ENCODE measurements at regions of chr2 and their contacts with region 1.

Region 1: GRCh38 chr2:130797493-130798435 is 39.0 kb upstream of the ARHGEF4 start:
- DNase-seq: peak; percentile 91
- H3K4me3 Mint-ChIP-seq: peak overlapping the region; percentile 67
- H3K27ac Mint-ChIP-seq: no peak overlapping the region
- H3K4me1 Mint-ChIP-seq: peaks cover 4% of the 10 kb centered on the region
- H3K27me3 Mint-ChIP-seq: no peaks in the 10 kb centered on the region
- CTCF ChIP-seq: peak; percentile 98

Region 2: GRCh38 chr2:129864720-129865119 is 933.0 kb before region 1 on chr2:
- CTCF ChIA-PET with region 1: no interaction called
- POLR2A ChIA-PET with region 1: no interaction called
- intact Hi-C with region 1: no loop called
- DNase-seq: no peak
- H3K4me3 Mint-ChIP-seq: no peak overlapping the region
- H3K27ac Mint-ChIP-seq: no peak overlapping the region
- H3K4me1 Mint-ChIP-seq: no peaks in the 10 kb centered on the region
- H3K27me3 Mint-ChIP-seq: no peaks in the 10 kb centered on the region
- CTCF ChIP-seq: no peak

Region 3: DNA sequence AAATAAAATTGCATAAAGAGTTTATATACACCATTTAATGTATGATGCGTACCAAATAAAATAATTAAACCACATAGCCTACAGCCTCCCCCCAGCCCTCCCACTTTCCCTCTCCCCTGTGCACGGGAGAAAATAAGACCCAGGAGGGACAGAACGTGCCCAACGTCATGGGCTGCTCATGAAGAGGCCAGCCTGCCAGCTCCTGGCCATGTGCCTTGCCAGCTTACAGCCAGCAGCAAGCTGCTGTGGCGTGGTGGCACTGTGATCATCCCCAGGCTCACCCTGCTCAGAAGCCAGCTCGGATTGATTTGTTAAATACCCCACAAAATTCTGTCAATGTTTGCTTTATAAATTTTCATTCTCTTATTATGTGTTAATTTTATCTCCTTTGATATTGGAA is 61.3 kb before region 1 on chr2:
- CTCF ChIA-PET with region 1: no interaction called
- POLR2A ChIA-PET with region 1: no interaction called
- intact Hi-C with region 1: no loop called
- DNase-seq: no peak
- H3K4me3 Mint-ChIP-seq: no peak overlapping the region
- H3K27ac Mint-ChIP-seq: no peak overlapping the region
- H3K4me1 Mint-ChIP-seq: no peaks in the 10 kb centered on the region
- H3K27me3 Mint-ChIP-seq: peaks cover 48% of the 10 kb centered on the region
- CTCF ChIP-seq: no peak

Region 4: GRCh38 chr2:130807659-130808385 is 10.1 kb after region 1 on chr2:
- CTCF ChIA-PET with region 1: interaction called, 9 read pairs
- POLR2A ChIA-PET with region 1: interaction called, 10 read pairs
- intact Hi-C with region 1: no loop called
- DNase-seq: peak; percentile 97
- H3K4me3 Mint-ChIP-seq: peak overlapping the region; percentile 66
- H3K27ac Mint-ChIP-seq: peak overlapping the region; percentile 96
- H3K4me1 Mint-ChIP-seq: peaks cover 39% of the 10 kb centered on the region
- H3K27me3 Mint-ChIP-seq: no peaks in the 10 kb centered on the region
- CTCF ChIP-seq: no peak

Region 5: GRCh38 chr2:130836501-130837174 is 38.9 kb after region 1 on chr2 and contains the start of gene ARHGEF4:
- CTCF ChIA-PET with region 1: interaction called, 10 read pairs
- POLR2A ChIA-PET with region 1: interaction called, 8 read pairs
- intact Hi-C with region 1: loop called (anchors 1 kb)
- DNase-seq: peak; percentile 68
- H3K4me3 Mint-ChIP-seq: peak within 1 kb of the TSS; percentile 71
- H3K27ac Mint-ChIP-seq: no peak within 1 kb of the TSS
- H3K4me1 Mint-ChIP-seq: peaks cover 26% of the 10 kb centered on the region
- H3K27me3 Mint-ChIP-seq: no peaks in the 10 kb centered on the region
- CTCF ChIP-seq: no peak
- total RNA-seq, gene ARHGEF4: 52.0 and 59.3 TPM in 2 replicates

Region 6: DNA sequence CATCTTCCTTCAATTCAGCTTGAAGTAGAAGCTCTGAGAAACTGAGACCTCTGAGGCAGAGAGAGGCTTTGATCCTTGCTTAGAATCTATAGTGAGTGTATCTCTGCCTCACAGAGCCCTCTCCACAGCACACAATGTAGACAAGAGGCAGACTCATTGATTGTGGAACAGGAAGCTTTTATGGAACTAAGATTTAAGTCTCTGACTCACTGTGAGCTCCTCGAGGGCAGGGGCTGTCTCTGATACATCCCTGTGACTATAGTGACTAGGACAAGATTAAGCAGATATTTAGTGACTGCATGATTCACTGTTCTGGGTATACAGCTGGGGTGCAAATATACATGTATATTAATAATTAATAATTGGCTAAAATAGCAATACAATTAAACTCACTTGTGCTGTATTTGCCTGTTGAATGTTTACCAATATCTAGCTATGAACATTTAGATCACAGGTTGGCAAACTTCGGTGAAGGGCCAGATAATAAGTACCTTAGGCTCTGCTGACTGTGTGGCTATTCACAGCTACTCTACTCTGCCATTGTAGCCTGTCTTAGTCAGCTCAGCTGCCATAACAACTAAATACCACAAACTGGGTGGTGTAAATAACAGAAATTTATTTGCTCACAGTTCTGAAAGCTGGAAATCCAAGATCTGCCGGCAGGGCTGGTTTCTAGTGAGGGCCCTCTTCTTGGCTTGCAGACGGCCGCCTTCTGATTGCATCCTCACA is 93.3 kb after region 1 on chr2:
- CTCF ChIA-PET with region 1: interaction called, 12 read pairs
- POLR2A ChIA-PET with region 1: no interaction called
- intact Hi-C with region 1: no loop called
- DNase-seq: no peak
- H3K4me3 Mint-ChIP-seq: no peak overlapping the region
- H3K27ac Mint-ChIP-seq: peak overlapping the region; percentile 61
- H3K4me1 Mint-ChIP-seq: peaks cover 32% of the 10 kb centered on the region
- H3K27me3 Mint-ChIP-seq: no peaks in the 10 kb centered on the region
- CTCF ChIP-seq: no peak

Region 7: DNA sequence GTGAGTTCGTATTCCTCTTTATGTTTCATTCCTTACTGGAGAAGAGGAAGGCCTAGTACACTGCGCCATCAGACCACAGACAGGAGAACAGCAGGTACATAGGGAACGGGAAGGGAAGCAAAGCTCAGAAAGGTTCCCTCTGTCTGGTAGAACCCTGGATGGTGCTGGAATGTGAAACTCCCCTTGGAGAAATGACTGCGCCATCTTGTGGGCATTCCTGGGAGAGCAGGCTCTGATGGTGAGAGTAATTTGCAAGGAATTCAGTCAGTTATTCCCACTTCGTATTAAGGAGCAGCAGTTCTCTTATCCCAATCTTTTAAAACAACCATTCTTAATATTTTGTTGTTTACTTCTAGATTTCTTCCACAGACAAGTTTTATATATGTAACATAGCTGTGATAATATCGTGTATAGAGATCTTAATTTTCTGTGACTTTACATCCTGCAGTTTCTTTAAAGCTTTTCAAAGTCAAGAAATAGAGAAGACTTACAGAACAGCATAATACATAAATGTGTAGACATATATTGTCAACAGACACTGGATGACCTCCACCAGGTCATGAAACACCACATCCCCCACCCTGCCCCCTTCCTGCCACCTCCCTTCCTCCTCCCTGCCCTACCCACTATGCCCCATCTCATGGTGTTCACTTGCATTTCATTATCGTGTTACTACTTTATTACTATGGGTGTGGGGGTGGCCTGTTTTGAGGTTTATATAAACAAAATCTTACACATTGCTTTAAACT is 122.8 kb after region 1 on chr2:
- CTCF ChIA-PET with region 1: interaction called, 102 read pairs
- POLR2A ChIA-PET with region 1: interaction called, 10 read pairs
- intact Hi-C with region 1: loop called (anchors 1 kb)
- DNase-seq: peak; percentile 85
- H3K4me3 Mint-ChIP-seq: no peak overlapping the region
- H3K27ac Mint-ChIP-seq: peak overlapping the region; percentile 61
- H3K4me1 Mint-ChIP-seq: peaks cover 6% of the 10 kb centered on the region
- H3K27me3 Mint-ChIP-seq: no peaks in the 10 kb centered on the region
- CTCF ChIP-seq: peak; percentile 90

Region 8: DNA sequence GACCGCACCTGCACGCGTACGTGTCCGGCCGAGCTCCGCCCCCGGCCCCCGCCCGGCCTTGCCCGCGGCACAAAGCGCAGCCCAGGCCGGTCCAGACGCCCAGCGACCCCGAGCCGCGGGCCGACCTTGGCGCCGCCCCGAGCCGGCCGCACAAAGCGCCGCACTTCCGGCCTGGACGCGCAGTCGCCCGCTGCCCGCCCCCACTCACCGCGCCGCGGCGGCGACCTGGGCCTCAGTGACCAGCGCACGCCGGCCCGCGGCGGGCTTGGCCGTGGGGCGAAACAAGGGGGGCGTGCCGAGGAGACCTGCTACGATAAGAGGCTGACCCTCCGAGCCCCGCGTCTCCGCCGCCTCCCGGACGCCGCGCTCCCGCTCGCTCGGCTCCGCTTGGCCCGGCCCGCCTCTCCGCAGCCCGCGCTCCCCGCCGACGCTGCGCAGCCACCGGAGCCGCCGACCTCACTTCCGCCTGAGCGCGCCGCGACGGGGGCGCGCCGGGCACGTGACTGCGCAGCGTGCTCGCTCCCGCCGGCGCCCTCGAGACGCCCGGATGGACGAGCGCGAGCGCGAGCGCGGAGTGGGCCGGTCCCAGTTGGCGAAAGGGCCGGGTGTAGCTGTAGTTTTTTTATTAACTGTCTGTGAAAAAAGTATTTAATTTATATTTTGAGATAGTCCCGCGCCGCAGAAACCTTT is 295.4 kb after region 1 on chr2 and contains the start of gene FAM168B:
- CTCF ChIA-PET with region 1: no interaction called
- POLR2A ChIA-PET with region 1: interaction called, 4 read pairs
- intact Hi-C with region 1: loop called (anchors 5 kb)
- DNase-seq: peak; percentile 85
- H3K4me3 Mint-ChIP-seq: peak within 1 kb of the TSS; percentile 89
- H3K27ac Mint-ChIP-seq: peak within 1 kb of the TSS; percentile 96
- H3K4me1 Mint-ChIP-seq: peaks cover 6% of the 10 kb centered on the region
- H3K27me3 Mint-ChIP-seq: no peaks in the 10 kb centered on the region
- CTCF ChIP-seq: no peak
- total RNA-seq, gene FAM168B: 159 and 172 TPM in 2 replicates

Measured in MCF 10A (cell line).